PC-9 (cell line): ENCODE measurements at regions of chr20 and their contacts with region 1.

Region 1: GRCh38 chr20:4076671-4077070 is 61.3 kb upstream of the RNF24 start:
- DNase-seq: peak; percentile 29 to 89
- H3K4me3 ChIP-seq: no peak overlapping the region
- H3K27ac ChIP-seq: peak overlapping the region; percentile 59
- H3K4me1 ChIP-seq: peaks cover 11% of the 10 kb centered on the region
- H3K27me3 ChIP-seq: no peaks in the 10 kb centered on the region
- CTCF ChIP-seq: no peak

Region 2: DNA sequence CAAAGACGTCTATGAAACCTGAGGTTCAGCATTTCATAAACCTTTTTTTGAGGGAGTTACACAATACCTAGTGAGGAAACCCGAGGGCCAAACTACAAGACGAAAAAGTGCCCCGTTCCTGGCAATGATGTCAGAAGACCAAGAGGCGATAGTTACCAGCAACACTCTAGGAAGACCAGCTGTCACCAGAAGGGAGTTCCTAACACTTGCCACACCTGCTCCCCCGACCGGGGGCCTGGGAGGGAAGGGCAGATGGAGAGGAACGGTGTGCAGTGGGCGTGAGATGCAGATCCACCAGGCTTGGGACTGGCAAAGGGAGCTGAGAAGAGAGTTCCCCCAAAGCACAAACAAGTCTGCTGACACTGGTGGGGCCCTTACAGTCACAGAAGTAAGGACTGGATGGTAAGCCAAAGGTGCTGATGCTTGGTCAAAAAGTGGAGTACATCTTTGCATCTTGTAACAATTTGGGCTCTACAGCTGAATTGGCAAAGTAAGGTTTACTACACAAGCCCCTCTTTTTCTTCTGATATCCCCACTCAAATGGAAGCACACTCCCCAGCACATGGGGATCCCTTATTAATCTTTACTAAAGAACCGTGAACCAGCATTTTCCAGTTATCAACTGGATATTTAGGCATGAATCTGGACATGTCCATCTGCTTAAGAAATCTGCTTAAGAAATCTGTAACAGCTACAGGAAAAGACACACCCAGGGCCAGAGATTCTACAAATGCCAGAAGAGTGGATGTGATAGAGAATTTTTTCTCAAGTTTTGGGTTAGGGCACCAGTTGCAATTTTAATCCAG is 149.0 kb before region 1 on chr20:
- CTCF ChIA-PET with region 1: no interaction called
- POLR2A ChIA-PET with region 1: no interaction called
- intact Hi-C with region 1: loop called (anchors 5 kb)
- DNase-seq: no peak
- H3K4me3 ChIP-seq: no peak overlapping the region
- H3K27ac ChIP-seq: peak overlapping the region; percentile 41; the same call in 1 of the 2 replicates
- H3K4me1 ChIP-seq: no peaks in the 10 kb centered on the region
- H3K27me3 ChIP-seq: no peaks in the 10 kb centered on the region
- CTCF ChIP-seq: no peak

Region 3: GRCh38 chr20:3940905-3941304 is 135.8 kb before region 1 on chr20:
- CTCF ChIA-PET with region 1: no interaction called
- POLR2A ChIA-PET with region 1: interaction called, 12 read pairs
- intact Hi-C with region 1: no loop called
- DNase-seq: peak in 1 of 2 experiments; percentile 9
- H3K4me3 ChIP-seq: no peak overlapping the region
- H3K27ac ChIP-seq: no peak overlapping the region
- H3K4me1 ChIP-seq: no peaks in the 10 kb centered on the region
- H3K27me3 ChIP-seq: no peaks in the 10 kb centered on the region
- CTCF ChIP-seq: no peak

Region 4: GRCh38 chr20:4413314-4414049 is 336.8 kb after region 1 on chr20:
- CTCF ChIA-PET with region 1: no interaction called
- POLR2A ChIA-PET with region 1: no interaction called
- intact Hi-C with region 1: no loop called
- DNase-seq: no peak
- H3K4me3 ChIP-seq: no peak overlapping the region
- H3K27ac ChIP-seq: no peak overlapping the region
- H3K4me1 ChIP-seq: no peaks in the 10 kb centered on the region
- H3K27me3 ChIP-seq: no peaks in the 10 kb centered on the region
- CTCF ChIP-seq: no peak